Activated CD4-positive, alpha-beta T cell treated with anti-CD3 and anti-CD28 coated beads for 36 hours (primary cell): ENCODE measurements at regions of chr2 and their contacts with region 1.

Region 1: DNA sequence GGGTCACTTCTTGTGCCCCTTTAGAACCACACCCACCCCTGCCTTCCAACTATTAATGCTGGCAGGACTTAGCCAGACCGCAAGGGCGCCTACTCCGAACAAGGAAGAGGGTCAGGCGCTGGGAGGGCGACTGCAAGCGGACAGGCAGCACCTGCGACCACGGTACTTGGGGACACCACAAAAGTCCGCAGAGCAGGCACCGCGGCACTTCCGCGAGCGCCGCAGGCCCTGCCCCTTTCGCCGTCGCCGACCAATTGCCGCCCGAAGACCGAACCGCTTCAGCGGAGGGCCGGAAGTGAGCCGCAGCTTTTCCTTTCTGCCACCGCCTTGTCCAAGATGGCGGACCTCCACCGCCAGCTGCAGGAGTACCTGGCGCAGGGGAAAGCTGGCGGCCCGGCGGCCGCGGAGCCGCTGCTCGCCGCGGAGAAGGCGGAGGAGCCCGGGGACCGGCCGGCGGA is at the start of gene SFT2D3:
- DNase-seq: peak; percentile 95
- ATAC-seq: peak; percentile 87
- H3K4me3 Mint-ChIP-seq: peak within 1 kb of the TSS; percentile 88
- H3K27ac Mint-ChIP-seq: peak within 1 kb of the TSS; percentile 95
- H3K4me1 Mint-ChIP-seq: peaks cover 34% of the 10 kb centered on the region
- H3K27me3 Mint-ChIP-seq: no peaks in the 10 kb centered on the region
- total RNA-seq, gene SFT2D3: 2.8 to 3.1 TPM

Region 2: GRCh38 chr2:127640082-127641072 is 60.8 kb before region 1 on chr2:
- CTCF ChIA-PET with region 1: interaction called, 4 read pairs
- POLR2A ChIA-PET with region 1: no interaction called
- intact Hi-C with region 1: loop called (anchors 2 to 5 kb)
- DNase-seq: peak; percentile 72
- ATAC-seq: peak; percentile 47
- H3K4me3 Mint-ChIP-seq: peak overlapping the region; percentile 63
- H3K27ac Mint-ChIP-seq: peak overlapping the region; percentile 67
- H3K4me1 Mint-ChIP-seq: peaks cover 59% of the 10 kb centered on the region
- H3K27me3 Mint-ChIP-seq: no peaks in the 10 kb centered on the region

Region 3: GRCh38 chr2:127649684-127650040 is 51.6 kb before region 1 on chr2:
- CTCF ChIA-PET with region 1: interaction called, 3 read pairs
- POLR2A ChIA-PET with region 1: interaction called, 3 read pairs
- intact Hi-C with region 1: loop called in 1 of 2 experiments (anchors 5 kb)
- DNase-seq: peak; percentile 92
- ATAC-seq: peak; percentile 85
- H3K4me3 Mint-ChIP-seq: no peak overlapping the region
- H3K27ac Mint-ChIP-seq: no peak overlapping the region
- H3K4me1 Mint-ChIP-seq: peaks cover 10% of the 10 kb centered on the region
- H3K27me3 Mint-ChIP-seq: no peaks in the 10 kb centered on the region

Region 4: GRCh38 chr2:127747621-127748020 is 46.4 kb after region 1 on chr2:
- CTCF ChIA-PET with region 1: no interaction called
- POLR2A ChIA-PET with region 1: no interaction called
- intact Hi-C with region 1: no loop called
- DNase-seq: no peak
- ATAC-seq: no peak
- H3K4me3 Mint-ChIP-seq: no peak overlapping the region
- H3K27ac Mint-ChIP-seq: no peak overlapping the region
- H3K4me1 Mint-ChIP-seq: peaks cover 31% of the 10 kb centered on the region
- H3K27me3 Mint-ChIP-seq: no peaks in the 10 kb centered on the region

Region 5: GRCh38 chr2:127810619-127811396 is 109.6 kb after region 1 on chr2 and contains the start of gene WDR33:
- CTCF ChIA-PET with region 1: interaction called, 5 read pairs
- POLR2A ChIA-PET with region 1: no interaction called
- intact Hi-C with region 1: loop called (anchors 1 to 2 kb)
- DNase-seq: peak; percentile 97
- ATAC-seq: peak; percentile 99
- H3K4me3 Mint-ChIP-seq: peak within 1 kb of the TSS; percentile 98
- H3K27ac Mint-ChIP-seq: peak within 1 kb of the TSS; percentile 99
- H3K4me1 Mint-ChIP-seq: peaks cover 42% of the 10 kb centered on the region
- H3K27me3 Mint-ChIP-seq: no peaks in the 10 kb centered on the region
- total RNA-seq, gene WDR33: 58.6 to 76.3 TPM

Region 6: GRCh38 chr2:127857265-127857808 is 156.1 kb after region 1 on chr2:
- CTCF ChIA-PET with region 1: interaction called, 3 read pairs
- POLR2A ChIA-PET with region 1: interaction called, 4 read pairs
- intact Hi-C with region 1: loop called in 1 of 2 experiments (anchors 1 kb)
- DNase-seq: peak; percentile 39
- ATAC-seq: no peak
- H3K4me3 Mint-ChIP-seq: peak overlapping the region; percentile 97
- H3K27ac Mint-ChIP-seq: peak overlapping the region; percentile 96
- H3K4me1 Mint-ChIP-seq: peaks cover 50% of the 10 kb centered on the region
- H3K27me3 Mint-ChIP-seq: no peaks in the 10 kb centered on the region

Region 7: DNA sequence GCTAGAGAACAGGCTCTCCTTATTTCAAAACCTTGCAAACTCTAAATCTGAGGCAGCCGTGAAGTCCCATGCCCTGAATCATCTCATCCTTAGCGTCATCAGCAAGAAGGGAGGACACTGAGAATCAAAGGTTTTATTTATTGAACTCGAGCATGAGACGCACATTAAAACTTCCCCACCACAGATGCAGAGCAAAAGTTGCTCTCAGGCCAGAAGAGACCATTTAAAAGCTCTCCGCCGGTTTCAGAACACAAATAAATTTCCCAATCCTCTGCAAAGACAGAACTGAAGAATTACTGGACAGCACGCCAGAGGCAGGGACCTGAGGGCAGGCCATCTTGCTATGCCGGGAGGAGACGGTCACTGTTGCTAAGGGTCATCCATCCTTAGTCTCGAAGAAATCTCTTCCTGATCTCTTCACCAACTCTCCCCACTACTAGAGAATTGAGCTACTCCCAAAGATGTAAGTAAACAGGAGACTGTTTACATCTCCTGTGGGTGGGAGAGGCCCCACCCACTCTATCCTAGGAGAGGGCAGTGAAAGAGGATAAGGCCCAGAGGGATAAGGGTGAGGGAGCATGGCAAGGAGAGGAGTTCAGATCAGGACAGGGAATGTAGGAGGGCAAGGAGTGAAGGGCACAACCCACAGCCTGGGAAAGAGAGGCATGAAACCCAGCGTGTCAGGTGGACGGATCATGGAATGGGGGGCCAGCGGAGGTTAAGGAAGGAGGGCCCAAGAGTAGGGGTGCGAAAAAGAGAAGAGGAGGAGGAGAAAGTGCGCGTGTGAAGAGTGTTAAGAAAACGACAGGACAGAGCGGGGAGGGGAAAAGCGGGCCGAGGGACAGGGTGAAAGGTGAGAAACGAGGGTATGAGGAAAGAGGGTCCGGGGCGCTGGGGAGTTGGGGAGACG is 183.5 kb after region 1 on chr2:
- CTCF ChIA-PET with region 1: interaction called, 3 read pairs
- POLR2A ChIA-PET with region 1: no interaction called
- intact Hi-C with region 1: loop called in 1 of 2 experiments (anchors 2 kb)
- DNase-seq: no peak
- ATAC-seq: no peak
- H3K4me3 Mint-ChIP-seq: peak overlapping the region; percentile 88
- H3K27ac Mint-ChIP-seq: peak overlapping the region; percentile 85
- H3K4me1 Mint-ChIP-seq: peaks cover 57% of the 10 kb centered on the region
- H3K27me3 Mint-ChIP-seq: no peaks in the 10 kb centered on the region

Region 8: DNA sequence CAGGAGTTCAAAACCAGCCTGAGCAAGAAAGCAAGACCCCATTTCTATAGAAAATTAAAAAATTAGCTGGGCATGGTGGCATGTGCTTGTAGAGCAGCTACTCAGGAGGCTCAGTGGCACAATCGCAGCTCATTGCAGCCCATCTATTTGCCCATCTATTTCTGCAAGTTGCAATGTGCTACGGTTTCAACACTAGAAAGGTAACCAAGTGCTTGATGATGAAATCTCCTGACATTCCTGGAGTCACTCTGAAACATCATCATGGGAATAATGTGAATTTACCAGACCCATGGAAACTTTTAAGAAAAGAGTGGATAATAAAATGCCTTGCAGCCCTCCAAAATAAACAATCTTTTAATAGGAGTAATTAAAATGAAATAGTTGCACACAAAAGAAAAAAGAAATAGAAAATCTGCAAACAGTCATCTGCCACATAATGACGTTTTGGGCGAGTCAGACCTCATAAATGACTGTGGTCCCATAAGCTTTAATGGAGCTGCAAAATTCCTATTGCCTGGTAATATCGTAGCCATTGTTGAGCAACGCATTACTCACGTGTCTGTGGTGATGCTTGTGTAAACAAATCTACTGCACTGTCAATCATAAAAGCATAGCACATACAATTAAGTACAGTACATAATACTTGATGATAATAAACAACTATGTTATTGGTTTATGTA is 231.1 kb after region 1 on chr2:
- CTCF ChIA-PET with region 1: no interaction called
- POLR2A ChIA-PET with region 1: no interaction called
- intact Hi-C with region 1: no loop called
- DNase-seq: no peak
- ATAC-seq: no peak
- H3K4me3 Mint-ChIP-seq: no peak overlapping the region
- H3K27ac Mint-ChIP-seq: no peak overlapping the region
- H3K4me1 Mint-ChIP-seq: peaks cover 3% of the 10 kb centered on the region
- H3K27me3 Mint-ChIP-seq: no peaks in the 10 kb centered on the region

Region 9: DNA sequence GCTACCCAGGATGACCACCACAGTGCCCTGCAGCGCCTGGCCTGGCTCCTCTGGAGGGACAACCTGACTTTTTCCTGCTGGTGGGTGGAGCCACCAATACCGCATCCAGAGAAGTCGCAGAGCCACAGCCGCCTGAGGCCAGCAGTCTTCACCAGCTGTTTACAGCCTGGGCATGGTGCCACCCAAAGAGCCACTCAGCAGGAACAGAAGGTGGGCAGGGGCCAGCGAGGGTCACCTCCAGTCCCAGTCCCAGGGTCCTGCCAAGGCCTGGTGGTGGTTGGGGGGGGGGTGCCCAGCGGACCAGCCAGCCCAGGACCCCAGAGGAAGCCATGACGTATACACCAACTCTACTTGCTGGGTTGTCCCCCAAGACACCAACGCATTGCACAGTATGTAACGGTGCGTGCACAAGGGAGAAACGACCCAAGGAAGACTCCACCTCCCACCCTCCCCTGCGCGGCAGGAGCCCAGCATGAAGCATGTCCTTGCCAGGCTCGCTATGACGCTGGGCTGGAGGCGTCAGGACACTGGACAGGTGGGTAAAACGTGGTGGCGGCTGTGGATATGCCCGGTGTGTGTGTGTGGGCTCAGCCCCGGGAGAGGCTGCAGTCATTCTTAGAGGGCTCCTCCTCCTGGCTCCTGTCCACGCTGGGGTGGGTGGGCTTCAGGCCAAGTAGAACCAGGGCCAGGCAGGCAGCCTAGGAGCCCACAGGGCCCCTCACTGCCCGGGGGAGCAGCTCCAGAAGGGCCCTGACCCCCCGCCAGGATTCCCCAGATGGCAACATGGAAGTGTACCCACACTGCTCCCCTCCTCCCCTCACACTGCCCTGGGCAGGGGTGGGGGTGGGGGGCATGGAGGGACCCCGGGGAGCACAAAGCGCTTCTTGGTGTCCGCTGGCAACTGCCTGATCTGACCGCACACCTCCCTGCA is 568.1 kb after region 1 on chr2:
- CTCF ChIA-PET with region 1: no interaction called
- POLR2A ChIA-PET with region 1: no interaction called
- intact Hi-C with region 1: no loop called
- DNase-seq: peak; percentile 2
- ATAC-seq: no peak
- H3K4me3 Mint-ChIP-seq: no peak overlapping the region
- H3K27ac Mint-ChIP-seq: no peak overlapping the region
- H3K4me1 Mint-ChIP-seq: no peaks in the 10 kb centered on the region
- H3K27me3 Mint-ChIP-seq: no peaks in the 10 kb centered on the region